GM10248 (cell line): ENCODE measurements at regions of chr12 and their contacts with region 1.

Region 1: GRCh38 chr12:52268212-52268611 is 6.2 kb upstream of the KRT86 start:
- DNase-seq: no peak
- CTCF ChIP-seq: no peak

Region 2: DNA sequence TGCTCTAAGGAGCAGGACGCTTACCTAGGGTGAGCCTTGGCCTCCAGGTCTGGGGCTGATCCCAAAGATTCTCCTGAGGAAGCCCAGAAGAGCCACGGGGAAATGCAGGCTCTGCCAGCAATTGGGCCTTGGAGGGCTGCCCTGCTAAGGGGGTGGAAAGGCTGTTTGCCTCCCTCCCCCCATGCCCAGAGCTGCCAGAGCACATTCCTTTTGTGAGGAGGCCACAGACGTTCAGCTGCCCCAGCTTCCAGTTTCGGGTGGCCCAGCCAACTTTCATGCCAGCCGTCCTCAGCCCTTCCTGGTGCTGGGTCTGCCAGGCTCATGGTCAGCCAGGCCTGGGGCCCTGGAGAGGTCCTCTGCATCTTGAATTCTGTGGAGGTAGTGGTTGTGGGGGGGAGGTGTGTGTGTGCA is 19.2 kb before region 1 on chr12:
- CTCF ChIA-PET with region 1: interaction called, 15 read pairs
- POLR2A ChIA-PET with region 1: no interaction called
- DNase-seq: no peak
- CTCF ChIP-seq: no peak

Region 3: GRCh38 chr12:52295663-52296062 is 27.5 kb after region 1 on chr12:
- CTCF ChIA-PET with region 1: no interaction called
- POLR2A ChIA-PET with region 1: no interaction called
- DNase-seq: no peak
- CTCF ChIP-seq: no peak

Region 4: DNA sequence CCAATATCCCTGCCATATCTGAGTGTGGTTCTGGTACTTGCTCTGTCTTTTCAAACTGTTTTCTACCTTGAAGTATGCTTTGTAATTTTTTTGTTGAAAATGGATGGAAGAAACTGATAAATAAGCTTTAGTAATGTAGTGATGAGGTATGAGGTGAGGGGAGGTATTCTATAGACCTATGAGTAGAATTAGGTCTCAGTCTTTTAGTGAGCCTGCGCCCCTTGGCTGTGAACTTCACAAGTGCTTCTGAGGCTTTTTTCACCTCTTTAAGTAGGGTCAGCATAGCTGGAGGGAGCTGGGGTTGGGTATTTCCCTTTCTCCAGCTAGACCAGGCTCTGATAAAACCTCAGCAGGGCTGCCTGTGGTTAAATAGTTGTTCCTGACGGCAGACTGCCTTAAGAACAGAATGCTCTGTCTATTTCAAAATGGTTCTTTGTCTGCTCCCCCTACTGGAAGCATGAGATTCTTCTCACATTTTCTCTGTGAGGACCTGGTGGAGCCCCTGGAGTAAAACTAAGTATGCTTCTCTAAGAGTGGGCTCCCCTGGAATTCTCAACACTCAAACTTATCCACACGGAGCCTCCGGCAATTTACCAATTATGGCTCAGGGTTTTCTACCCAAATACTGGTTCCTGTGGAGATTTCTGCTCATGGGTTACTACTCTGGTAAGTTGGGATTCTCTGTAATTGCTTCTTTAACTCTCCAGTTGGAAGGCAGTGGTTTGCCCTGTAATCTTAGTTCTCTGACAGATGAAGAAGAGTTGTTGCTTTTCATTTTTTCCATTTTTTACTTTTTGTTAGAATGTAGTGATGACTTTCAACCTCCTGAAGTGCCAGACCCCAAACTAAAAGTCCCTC is 238.9 kb after region 1 on chr12:
- CTCF ChIA-PET with region 1: no interaction called
- POLR2A ChIA-PET with region 1: no interaction called
- DNase-seq: no peak
- CTCF ChIP-seq: peak; percentile 45